Endothelial cell of umbilical vein (primary cell): ENCODE measurements at regions of chr9 and their contacts with region 1.

Region 1: DNA sequence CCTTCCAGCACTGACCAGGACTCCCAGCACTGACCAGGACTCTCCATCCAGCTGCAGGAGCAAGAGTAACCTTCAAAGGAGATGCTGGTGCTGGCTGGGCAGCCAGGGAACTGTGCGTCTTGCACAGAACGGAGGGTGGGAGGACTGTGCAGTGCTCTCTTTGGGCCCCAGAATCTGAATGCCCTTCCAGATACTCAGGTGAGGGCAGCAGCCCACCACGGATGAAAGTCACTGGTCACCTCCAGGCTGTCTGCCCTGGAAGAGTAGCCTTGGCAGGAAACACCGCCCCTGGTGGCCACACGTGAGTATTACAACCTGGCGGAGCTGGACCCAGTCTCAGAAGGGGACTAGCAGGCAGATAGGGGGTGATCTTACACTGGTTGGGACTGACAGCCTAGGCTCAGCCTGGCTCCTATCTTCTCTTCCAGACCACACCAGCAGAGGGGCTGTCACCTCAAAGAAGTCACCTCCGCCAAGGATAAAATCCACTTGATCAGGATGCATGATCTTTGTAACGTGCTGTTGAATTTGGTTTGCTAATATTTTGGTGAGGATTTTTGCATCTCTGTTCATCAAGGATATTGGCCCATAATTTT is 4.8 kb upstream of the SARDH start:
- DNase-seq: peak; percentile 82
- H3K4me3 ChIP-seq: no peak overlapping the region
- H3K27ac ChIP-seq: no peak overlapping the region
- H3K4me1 ChIP-seq: peaks cover 2% of the 10 kb centered on the region
- H3K27me3 ChIP-seq: peaks cover 2 to 12% of the 10 kb centered on the region in 2 experiments
- CTCF ChIP-seq: peak; percentile 98 to 99
- POLR2A ChIP-seq: no peak

Region 2: GRCh38 chr9:133731876-133732638 is 10.9 kb before region 1 on chr9:
- CTCF ChIA-PET with region 1: interaction called, 12 read pairs
- POLR2A ChIA-PET with region 1: no interaction called
- dilution Hi-C with region 1: no loop called
- intact Hi-C with region 1: no loop called
- DNase-seq: peak; percentile 21
- H3K4me3 ChIP-seq: no peak overlapping the region
- H3K27ac ChIP-seq: no peak overlapping the region
- H3K4me1 ChIP-seq: no peaks in the 10 kb centered on the region
- H3K27me3 ChIP-seq: no peaks in the 10 kb centered on the region
- CTCF ChIP-seq: no peak
- POLR2A ChIP-seq: no peak

Region 3: DNA sequence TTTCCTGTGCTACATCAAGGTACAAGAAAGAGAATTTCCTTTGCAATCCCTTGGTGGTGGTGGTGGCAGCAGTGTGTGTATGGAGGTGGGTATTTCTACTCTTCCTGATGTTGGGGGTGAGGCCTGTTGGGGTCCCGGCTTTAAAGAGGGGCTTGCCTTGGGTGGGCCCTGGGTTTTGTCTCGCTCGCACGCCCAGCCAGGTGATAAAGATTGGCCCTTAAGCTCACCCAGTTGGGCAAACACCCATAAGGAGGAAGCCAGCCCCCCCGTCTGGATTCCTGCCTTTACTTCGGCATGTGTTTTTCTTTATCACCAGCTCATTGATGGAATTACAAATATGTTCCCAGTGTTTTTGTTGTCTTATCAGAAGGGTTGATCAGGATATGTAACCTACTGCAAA is 11.2 kb after region 1 on chr9:
- CTCF ChIA-PET with region 1: interaction called, 12 read pairs
- POLR2A ChIA-PET with region 1: interaction called, 3 read pairs
- dilution Hi-C with region 1: no loop called
- intact Hi-C with region 1: no loop called
- DNase-seq: no peak
- H3K4me3 ChIP-seq: no peak overlapping the region
- H3K27ac ChIP-seq: no peak overlapping the region
- H3K4me1 ChIP-seq: no peaks in the 10 kb centered on the region
- H3K27me3 ChIP-seq: peaks cover 4% of the 10 kb centered on the region in 2 experiments
- CTCF ChIP-seq: no peak
- POLR2A ChIP-seq: no peak